Left cardiac atrium (tissue), 4 donors: ENCODE measurements at regions of chr6 and their contacts with region 1.

Region 1: DNA sequence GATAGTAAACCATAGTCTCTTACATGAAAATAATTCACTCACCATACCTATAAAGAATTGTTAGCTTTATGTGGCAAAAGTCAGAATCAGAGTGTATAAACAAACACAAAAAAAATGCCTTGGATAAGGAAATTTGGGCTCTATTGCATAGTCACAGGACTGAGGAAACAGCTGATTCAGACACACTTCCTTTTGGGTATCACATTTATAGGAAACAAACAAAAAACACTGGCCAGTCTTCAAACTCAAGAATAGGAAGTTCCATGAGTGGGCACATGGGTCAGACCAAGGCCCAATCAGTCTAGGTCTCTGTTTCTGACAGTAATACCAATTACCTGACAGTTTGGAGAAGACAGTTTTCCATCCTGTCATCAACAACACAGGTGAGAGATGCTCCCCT is 8.0 kb downstream of the SLC18B1 start:
- DNase-seq: no peak
- ATAC-seq: peak; percentile 15 to 40

Region 2: GRCh38 chr6:132161283-132161682 is 629.2 kb before region 1 on chr6:
- intact Hi-C with region 1: loop called in 1 of 2 experiments (anchors 5 kb)
- DNase-seq: no peak
- ATAC-seq: peak; percentile 63 to 70

Region 3: GRCh38 chr6:132902901-132903300 is 112.5 kb after region 1 on chr6:
- intact Hi-C with region 1: no loop called
- DNase-seq: no peak
- ATAC-seq: no peak

Region 4: GRCh38 chr6:133301835-133302234 is 511.4 kb after region 1 on chr6:
- intact Hi-C with region 1: no loop called
- DNase-seq: no peak
- ATAC-seq: no peak